WTC11 (cell line): ENCODE measurements at regions of chr5 and their contacts with region 1.

Region 1: GRCh38 chr5:159286420-159287035 is 23.4 kb downstream of the UBLCP1 start:
- DNase-seq: no peak
- ATAC-seq: no peak
- H3K4me3 Mint-ChIP-seq: no peak overlapping the region
- H3K27ac Mint-ChIP-seq: no peak overlapping the region
- H3K4me1 Mint-ChIP-seq: peaks cover 4% of the 10 kb centered on the region
- H3K27me3 Mint-ChIP-seq: no peaks in the 10 kb centered on the region
- CTCF ChIP-seq: no peak

Region 2: DNA sequence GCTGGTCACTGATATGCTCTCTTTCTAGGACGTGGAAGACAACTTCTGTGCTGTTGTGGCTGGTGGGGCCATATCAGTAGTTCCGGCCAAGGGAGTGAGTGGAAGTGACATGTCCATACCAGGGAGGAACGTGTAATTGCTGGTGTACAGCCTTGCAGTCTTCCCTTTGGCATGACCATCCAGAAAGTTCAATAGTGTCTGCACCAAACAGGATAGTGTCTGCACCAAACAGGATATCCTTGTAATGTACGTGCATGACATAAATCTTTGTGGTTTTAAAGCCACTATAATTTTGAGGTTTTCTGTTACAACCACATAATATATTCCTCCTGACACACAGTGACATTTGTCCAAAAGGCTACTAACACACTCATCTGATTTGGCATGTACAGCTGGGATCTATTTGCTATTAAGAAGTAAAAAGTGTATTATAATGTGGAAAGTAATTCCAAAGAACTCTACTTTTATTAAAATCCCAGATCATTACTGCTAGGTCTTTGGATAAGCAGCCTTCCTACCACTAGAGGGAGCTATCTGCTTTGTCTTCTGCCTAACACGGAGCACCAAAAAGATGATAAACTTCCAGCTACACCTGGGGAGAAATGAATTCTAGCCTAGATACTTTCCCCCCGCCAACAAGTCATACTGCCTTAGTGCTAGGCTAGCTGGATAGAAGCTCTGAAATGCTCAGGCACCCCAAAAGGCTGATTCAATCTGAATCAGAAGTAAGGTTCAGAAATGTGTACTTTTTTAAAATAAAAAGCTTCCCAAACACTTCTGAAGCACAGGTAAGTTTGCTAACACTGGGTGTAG is 129.9 kb before region 1 on chr5:
- CTCF ChIA-PET with region 1: interaction called, 14 read pairs
- POLR2A ChIA-PET with region 1: no interaction called
- DNase-seq: no peak
- ATAC-seq: peak; percentile 83
- H3K4me3 Mint-ChIP-seq: no peak overlapping the region
- H3K27ac Mint-ChIP-seq: no peak overlapping the region
- H3K4me1 Mint-ChIP-seq: peaks cover 10% of the 10 kb centered on the region
- H3K27me3 Mint-ChIP-seq: no peaks in the 10 kb centered on the region
- CTCF ChIP-seq: peak; percentile 73

Region 3: GRCh38 chr5:159310511-159310910 is 24.0 kb after region 1 on chr5:
- CTCF ChIA-PET with region 1: interaction called, 49 read pairs
- POLR2A ChIA-PET with region 1: no interaction called
- DNase-seq: peak; percentile 70
- ATAC-seq: peak; percentile 96
- H3K4me3 Mint-ChIP-seq: peak overlapping the region; percentile 66
- H3K27ac Mint-ChIP-seq: no peak overlapping the region
- H3K4me1 Mint-ChIP-seq: peaks cover 13% of the 10 kb centered on the region
- H3K27me3 Mint-ChIP-seq: peaks cover 33% of the 10 kb centered on the region
- CTCF ChIP-seq: no peak

Region 4: GRCh38 chr5:159316519-159317383 is 30.2 kb after region 1 on chr5:
- CTCF ChIA-PET with region 1: interaction called, 49 read pairs
- POLR2A ChIA-PET with region 1: no interaction called
- DNase-seq: peak; percentile 46
- ATAC-seq: peak; percentile 96
- H3K4me3 Mint-ChIP-seq: no peak overlapping the region
- H3K27ac Mint-ChIP-seq: no peak overlapping the region
- H3K4me1 Mint-ChIP-seq: no peaks in the 10 kb centered on the region
- H3K27me3 Mint-ChIP-seq: peaks cover 2% of the 10 kb centered on the region
- CTCF ChIP-seq: 0 out of 2 replicates have a peak, but pooled peaks have one; percentile 29

Region 5: DNA sequence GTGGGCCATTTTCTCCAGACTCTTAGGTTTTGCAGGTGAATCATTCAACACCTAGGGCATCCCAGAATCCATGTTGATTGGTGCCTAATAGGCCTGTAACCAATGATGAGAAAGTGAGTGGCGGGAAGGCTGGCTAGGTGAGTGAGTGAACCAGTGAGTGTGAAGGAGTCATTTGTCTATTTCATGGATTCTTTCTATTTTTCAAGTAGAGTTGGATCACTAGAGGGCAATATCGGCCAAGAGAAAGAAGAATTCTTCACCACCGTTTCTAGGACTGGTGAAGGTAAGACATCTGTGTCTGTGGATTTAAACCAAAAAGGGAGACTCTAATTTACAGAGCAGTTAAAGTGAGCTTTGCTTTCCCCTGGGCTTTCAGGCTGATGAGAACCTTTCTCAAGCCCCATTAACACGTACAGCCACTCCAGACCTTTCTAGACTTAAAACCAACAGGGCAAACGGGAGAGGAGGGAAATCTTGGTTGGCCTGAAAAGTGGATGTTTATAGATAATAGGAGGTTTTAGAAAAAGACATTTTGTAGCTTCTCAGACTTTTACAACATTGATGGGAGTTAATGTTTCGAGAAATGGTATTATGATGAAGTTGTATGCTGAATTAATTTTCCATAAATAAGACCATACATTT is 158.0 kb after region 1 on chr5:
- CTCF ChIA-PET with region 1: interaction called, 17 read pairs
- POLR2A ChIA-PET with region 1: no interaction called
- DNase-seq: no peak
- ATAC-seq: peak; percentile 35
- H3K4me3 Mint-ChIP-seq: no peak overlapping the region
- H3K27ac Mint-ChIP-seq: no peak overlapping the region
- H3K4me1 Mint-ChIP-seq: peaks cover 17% of the 10 kb centered on the region
- H3K27me3 Mint-ChIP-seq: no peaks in the 10 kb centered on the region
- CTCF ChIP-seq: no peak